Activated CD4-positive, alpha-beta T cell treated with anti-CD3 and anti-CD28 coated beads, Interleukin-2, amount 10 ng/mL, durations not matched to agents 24 days and 14 days (primary cell): ENCODE measurements at regions of chr3 and their contacts with region 1.

Region 1: GRCh38 chr3:101724329-101725193 is at the start of gene CEP97:
- DNase-seq: peak; percentile 96
- H3K4me3 Mint-ChIP-seq: peak within 1 kb of the TSS; percentile 95
- H3K27ac Mint-ChIP-seq: peak within 1 kb of the TSS; percentile 97
- H3K4me1 Mint-ChIP-seq: peaks cover 35% of the 10 kb centered on the region
- H3K27me3 Mint-ChIP-seq: no peaks in the 10 kb centered on the region
- total RNA-seq, gene CEP97: 20.3 and 22.8 TPM in 2 replicates

Region 2: DNA sequence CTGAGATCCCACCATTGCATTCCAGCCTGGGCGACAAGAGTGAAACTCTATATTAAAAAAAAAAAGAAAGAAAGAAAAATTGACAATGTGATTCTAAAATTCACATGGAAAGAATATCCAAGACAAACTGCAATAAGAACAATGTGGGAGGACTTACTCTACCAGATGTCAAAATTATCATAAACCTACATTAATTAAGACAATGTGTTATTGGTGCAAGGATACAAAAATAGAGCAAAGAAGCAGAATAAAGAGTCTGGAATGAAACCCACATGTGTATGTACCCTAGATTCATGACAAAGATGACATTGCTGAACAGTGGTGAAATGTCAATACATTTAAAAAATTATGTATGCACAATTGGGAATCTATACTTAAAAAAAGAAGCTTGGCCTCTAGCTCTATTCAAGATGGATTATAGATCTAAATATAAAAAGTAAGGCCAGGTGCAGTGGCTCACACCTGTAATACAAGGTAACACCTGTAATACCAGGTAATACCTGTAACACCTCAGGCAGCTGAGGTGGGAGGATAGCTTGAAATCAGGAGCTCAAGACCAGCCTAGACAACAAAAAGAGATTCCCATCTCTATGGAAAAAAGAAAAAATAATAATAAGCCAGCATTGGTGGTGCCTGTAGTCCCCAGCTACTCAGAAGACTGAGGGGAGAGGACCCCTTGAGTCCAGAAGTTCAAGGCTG is 93.3 kb before region 1 on chr3:
- intact Hi-C with region 1: no loop called
- DNase-seq: no peak
- H3K4me3 Mint-ChIP-seq: no peak overlapping the region
- H3K27ac Mint-ChIP-seq: no peak overlapping the region
- H3K4me1 Mint-ChIP-seq: peaks cover under 1% of the 10 kb centered on the region
- H3K27me3 Mint-ChIP-seq: no peaks in the 10 kb centered on the region

Region 3: DNA sequence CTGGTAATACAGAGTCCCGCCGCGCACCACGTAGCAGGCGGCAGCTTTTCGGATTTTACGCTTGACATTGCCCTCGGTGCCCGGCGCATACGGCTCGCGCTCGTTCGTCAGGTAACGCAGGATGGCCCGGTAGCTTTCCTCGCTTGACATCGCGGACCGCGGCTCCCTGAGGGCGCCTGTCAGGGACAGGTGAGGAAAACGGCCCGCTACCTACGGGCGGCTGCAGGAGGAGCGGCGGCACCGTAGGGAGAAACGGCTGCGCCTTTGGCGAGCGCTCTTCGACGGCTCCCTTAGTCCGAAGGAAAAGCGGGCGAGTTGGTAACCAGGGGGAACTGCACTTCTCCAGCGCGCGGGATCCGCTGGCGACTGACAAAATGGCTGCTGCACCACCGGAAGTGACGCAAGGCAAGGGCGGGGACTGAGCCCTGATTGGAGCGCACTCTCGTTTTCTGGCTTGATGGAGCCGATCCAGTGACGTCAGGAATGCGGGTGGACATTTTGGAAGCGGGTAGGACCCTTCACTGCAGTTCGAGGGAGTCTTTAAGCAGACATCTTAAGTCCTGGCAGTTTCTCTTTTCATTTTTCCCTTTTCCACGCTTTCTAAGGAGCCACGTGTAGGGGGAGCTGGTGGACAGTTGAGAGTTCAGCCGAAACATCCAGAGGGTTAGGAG is 47.7 kb before region 1 on chr3 and contains the start of gene ZBTB11:
- intact Hi-C with region 1: loop called (anchors 1 kb)
- DNase-seq: peak; percentile 100
- H3K4me3 Mint-ChIP-seq: peak within 1 kb of the TSS; percentile 89
- H3K27ac Mint-ChIP-seq: peak within 1 kb of the TSS; percentile 97
- H3K4me1 Mint-ChIP-seq: peaks cover 36% of the 10 kb centered on the region
- H3K27me3 Mint-ChIP-seq: no peaks in the 10 kb centered on the region
- total RNA-seq, gene ZBTB11: 29.0 and 30.2 TPM in 2 replicates

Region 4: DNA sequence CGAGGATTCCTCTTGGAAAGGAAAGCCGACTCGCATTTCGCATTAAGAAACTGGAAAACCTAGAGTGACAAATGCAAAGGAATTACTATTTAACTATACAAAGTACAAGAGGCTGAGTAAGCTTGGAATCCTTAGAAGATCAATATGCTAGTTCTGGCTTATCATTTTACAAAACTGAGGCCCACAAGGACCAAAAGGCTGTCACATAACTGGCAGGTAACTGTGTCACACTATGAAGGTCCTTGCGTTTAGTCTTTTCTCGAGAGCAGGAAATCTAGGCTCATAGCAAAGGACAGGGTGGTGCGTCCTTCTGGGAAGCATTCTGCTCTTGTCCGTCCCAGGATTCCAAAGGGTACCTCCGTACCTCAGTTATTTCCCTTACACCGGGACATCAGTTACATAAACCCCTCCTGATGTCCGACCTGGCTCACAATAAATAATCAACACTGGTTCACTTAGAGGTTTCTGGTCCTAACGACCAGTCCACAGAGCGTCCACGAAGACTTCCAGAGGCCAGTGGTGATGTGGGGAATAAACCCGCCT is 38.6 kb before region 1 on chr3:
- intact Hi-C with region 1: loop called (anchors 1 kb)
- DNase-seq: no peak
- H3K4me3 Mint-ChIP-seq: peak overlapping the region; percentile 98
- H3K27ac Mint-ChIP-seq: peak overlapping the region; percentile 98
- H3K4me1 Mint-ChIP-seq: peaks cover 24% of the 10 kb centered on the region
- H3K27me3 Mint-ChIP-seq: no peaks in the 10 kb centered on the region

Region 5: DNA sequence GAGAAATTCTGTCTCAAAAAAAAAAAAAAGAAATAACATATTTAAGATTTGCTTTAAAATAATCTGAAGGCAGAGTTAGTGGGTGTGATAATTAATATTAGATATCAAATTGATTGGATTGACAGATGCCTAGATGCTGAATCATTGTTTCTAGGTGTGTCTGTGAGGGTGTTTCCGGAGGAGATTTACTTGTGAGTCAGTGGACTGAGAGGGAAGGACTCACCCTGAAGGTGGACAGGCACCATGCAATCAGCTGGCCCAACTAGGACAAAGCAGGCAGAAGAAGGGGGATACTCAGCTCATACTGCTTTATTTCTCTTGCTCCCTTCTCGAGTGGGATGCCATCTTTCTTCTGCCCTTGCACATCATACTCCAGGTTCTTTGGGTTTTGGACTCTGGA is 21.4 kb before region 1 on chr3:
- intact Hi-C with region 1: no loop called
- DNase-seq: no peak
- H3K4me3 Mint-ChIP-seq: no peak overlapping the region
- H3K27ac Mint-ChIP-seq: no peak overlapping the region
- H3K4me1 Mint-ChIP-seq: peaks cover 2% of the 10 kb centered on the region
- H3K27me3 Mint-ChIP-seq: no peaks in the 10 kb centered on the region

Region 6: GRCh38 chr3:101779047-101779821 is 54.7 kb after region 1 on chr3 and contains the start of gene NXPE3:
- intact Hi-C with region 1: loop called (anchors 1 kb)
- DNase-seq: peak; percentile 98
- H3K4me3 Mint-ChIP-seq: peak within 1 kb of the TSS; percentile 97
- H3K27ac Mint-ChIP-seq: peak within 1 kb of the TSS; percentile 94
- H3K4me1 Mint-ChIP-seq: peaks cover 31% of the 10 kb centered on the region
- H3K27me3 Mint-ChIP-seq: no peaks in the 10 kb centered on the region
- total RNA-seq, gene NXPE3: 17.2 and 18.2 TPM in 2 replicates